ENCODE measurements at regions of chr1 and their contacts with region 1.

Region 1: GRCh38 chr1:76154206-76154956 is 79.8 kb downstream of the ST6GALNAC3 start:
- DNase-seq: peak; percentile 68 to 84 (median 81)
- ATAC-seq: peak; percentile 95
- H3K4me3 ChIP-seq: peak overlapping the region; percentile 80
- H3K4me3 Mint-ChIP-seq: peak overlapping the region; percentile 82 to 96 (median 92)
- H3K27ac ChIP-seq: peak overlapping the region; percentile 46
- H3K27ac Mint-ChIP-seq: peak overlapping the region; percentile 39 to 94 (median 90)
- H3K4me1 ChIP-seq: peaks cover 0 to 3% of the 10 kb centered on the region in 2 donors
- H3K4me1 Mint-ChIP-seq: peaks cover 7 to 15% (median 10%) of the 10 kb centered on the region in 7 donors
- H3K27me3 ChIP-seq: no peaks in the 10 kb centered on the region
- H3K27me3 Mint-ChIP-seq: peaks cover 0 to 9% (median 0%) of the 10 kb centered on the region in 5 donors

Region 2: GRCh38 chr1:76269155-76269554 is 114.8 kb after region 1 on chr1:
- CTCF ChIA-PET with region 1: no interaction called
- POLR2A ChIA-PET with region 1: no interaction called
- intact Hi-C with region 1: loop called (anchors 1 kb)
- DNase-seq: no peak
- ATAC-seq: no peak
- H3K4me3 ChIP-seq: no peak overlapping the region
- H3K4me3 Mint-ChIP-seq: peak overlapping the region in 7 of 10 donors; percentile 63 to 86 (median 70)
- H3K27ac ChIP-seq: no peak overlapping the region
- H3K27ac Mint-ChIP-seq: peak overlapping the region; percentile 27 to 95 (median 58)
- H3K4me1 ChIP-seq: peaks cover 29 to 51% of the 10 kb centered on the region in 2 donors
- H3K4me1 Mint-ChIP-seq: peaks cover 34 to 93% (median 79%) of the 10 kb centered on the region in 7 donors
- H3K27me3 ChIP-seq: no peaks in the 10 kb centered on the region
- H3K27me3 Mint-ChIP-seq: peaks cover 0 to 3% (median 0%) of the 10 kb centered on the region in 5 donors

Region 3: DNA sequence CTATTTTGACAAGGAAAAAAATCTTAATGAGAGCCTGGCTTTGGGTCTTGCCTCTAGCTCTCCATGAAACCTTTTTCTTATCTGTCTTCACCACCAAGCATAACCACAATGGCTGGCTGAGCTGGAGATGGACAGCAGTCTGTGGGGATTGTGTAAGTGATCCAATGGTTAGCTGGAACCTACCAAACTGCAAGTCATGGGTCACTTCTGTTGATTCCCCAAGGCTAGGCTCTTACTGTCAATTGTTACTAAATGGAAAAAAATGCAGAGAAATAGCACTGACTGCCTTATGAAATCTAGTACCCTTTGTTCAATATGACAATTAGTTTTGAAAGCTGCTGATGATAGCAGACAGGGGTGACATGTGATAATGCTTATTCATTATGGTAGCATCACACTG is 279.1 kb after region 1 on chr1:
- CTCF ChIA-PET with region 1: no interaction called
- POLR2A ChIA-PET with region 1: no interaction called
- intact Hi-C with region 1: loop called in 1 of 2 experiments (anchors 5 kb)
- DNase-seq: no peak
- ATAC-seq: no peak
- H3K4me3 ChIP-seq: no peak overlapping the region
- H3K4me3 Mint-ChIP-seq: no peak overlapping the region
- H3K27ac ChIP-seq: no peak overlapping the region
- H3K27ac Mint-ChIP-seq: no peak overlapping the region
- H3K4me1 ChIP-seq: no peaks in the 10 kb centered on the region
- H3K4me1 Mint-ChIP-seq: peaks cover 0 to 4% (median 0%) of the 10 kb centered on the region in 7 donors
- H3K27me3 ChIP-seq: no peaks in the 10 kb centered on the region
- H3K27me3 Mint-ChIP-seq: no peaks in the 10 kb centered on the region

Region 4: GRCh38 chr1:76615253-76616035 is 461.1 kb after region 1 on chr1:
- CTCF ChIA-PET with region 1: no interaction called
- POLR2A ChIA-PET with region 1: no interaction called
- intact Hi-C with region 1: loop called in 1 of 2 experiments (anchors 10 kb)
- DNase-seq: no peak
- ATAC-seq: no peak
- H3K4me3 ChIP-seq: no peak overlapping the region
- H3K4me3 Mint-ChIP-seq: no peak overlapping the region
- H3K27ac ChIP-seq: no peak overlapping the region
- H3K27ac Mint-ChIP-seq: no peak overlapping the region
- H3K4me1 ChIP-seq: no peaks in the 10 kb centered on the region
- H3K4me1 Mint-ChIP-seq: peaks cover 0 to 3% (median 0%) of the 10 kb centered on the region in 7 donors
- H3K27me3 ChIP-seq: no peaks in the 10 kb centered on the region
- H3K27me3 Mint-ChIP-seq: no peaks in the 10 kb centered on the region

Region 5: GRCh38 chr1:76868154-76868882 is 713.9 kb after region 1 on chr1:
- CTCF ChIA-PET with region 1: no interaction called
- POLR2A ChIA-PET with region 1: no interaction called
- intact Hi-C with region 1: loop called in 1 of 2 experiments (anchors 10 kb)
- DNase-seq: peak in 3 of 9 donors; percentile 1 to 11 (median 6)
- ATAC-seq: peak; percentile 60
- H3K4me3 ChIP-seq: peak overlapping the region; percentile 45
- H3K4me3 Mint-ChIP-seq: peak overlapping the region; percentile 56 to 88 (median 76)
- H3K27ac ChIP-seq: no peak overlapping the region
- H3K27ac Mint-ChIP-seq: no peak overlapping the region
- H3K4me1 ChIP-seq: peaks cover 0 to 13% of the 10 kb centered on the region in 2 donors
- H3K4me1 Mint-ChIP-seq: peaks cover 0 to 25% (median 6%) of the 10 kb centered on the region in 7 donors
- H3K27me3 ChIP-seq: peaks cover 8 to 14% of the 10 kb centered on the region in 2 donors
- H3K27me3 Mint-ChIP-seq: peaks cover 57 to 77% (median 76%) of the 10 kb centered on the region in 5 donors

Region 6: GRCh38 chr1:77313491-77313890 is 1159.1 kb after region 1 on chr1:
- CTCF ChIA-PET with region 1: interaction called, 3 read pairs
- POLR2A ChIA-PET with region 1: no interaction called
- intact Hi-C with region 1: loop called in 1 of 2 experiments (anchors 1 kb)
- DNase-seq: peak in 8 of 9 donors; percentile 7 to 29 (median 26)
- ATAC-seq: peak; percentile 82
- H3K4me3 ChIP-seq: no peak overlapping the region
- H3K4me3 Mint-ChIP-seq: peak overlapping the region in 4 of 10 donors; percentile 23 to 53 (median 38)
- H3K27ac ChIP-seq: no peak overlapping the region
- H3K27ac Mint-ChIP-seq: peak overlapping the region in 8 of 9 donors; percentile 13 to 84 (median 68)
- H3K4me1 ChIP-seq: peaks cover 2 to 19% of the 10 kb centered on the region in 2 donors
- H3K4me1 Mint-ChIP-seq: peaks cover 17 to 58% (median 49%) of the 10 kb centered on the region in 7 donors
- H3K27me3 ChIP-seq: no peaks in the 10 kb centered on the region
- H3K27me3 Mint-ChIP-seq: no peaks in the 10 kb centered on the region

Measured in naive thymus-derived CD4-positive, alpha-beta T cell (primary cell).